ENCODE measurements at regions of chr3 and their contacts with region 1.

Region 1: GRCh38 chr3:40971191-40972168 is 227.8 kb upstream of the CTNNB1 start:
- DNase-seq: peak; percentile 44 to 87
- ATAC-seq: peak; percentile 81 to 97 (median 90)
- H3K4me3 ChIP-seq: peak overlapping the region in 1 of 10 donors; percentile 1
- H3K27ac ChIP-seq: peak overlapping the region; percentile 20 to 85 (median 78)
- H3K4me1 ChIP-seq: peaks cover 19 to 64% (median 58%) of the 10 kb centered on the region in 9 donors
- H3K27me3 ChIP-seq: no peaks in the 10 kb centered on the region
- CTCF ChIP-seq: peak in 1 of 9 donors; percentile 17

Region 2: GRCh38 chr3:40780291-40780924 is 191.1 kb before region 1 on chr3:
- intact Hi-C with region 1: loop called in 3 of 10 experiments (anchors 5 to 10 kb)
- DNase-seq: peak; percentile 78 to 86
- ATAC-seq: peak; percentile 84 to 93 (median 88)
- H3K4me3 ChIP-seq: peak overlapping the region in 7 of 10 donors; percentile 3 to 33 (median 22)
- H3K27ac ChIP-seq: peak overlapping the region; percentile 78 to 88 (median 82)
- H3K4me1 ChIP-seq: peaks cover 15 to 34% (median 23%) of the 10 kb centered on the region in 9 donors
- H3K27me3 ChIP-seq: no peaks in the 10 kb centered on the region
- CTCF ChIP-seq: peak in 2 of 9 donors; percentile 10 to 26

Region 3: DNA sequence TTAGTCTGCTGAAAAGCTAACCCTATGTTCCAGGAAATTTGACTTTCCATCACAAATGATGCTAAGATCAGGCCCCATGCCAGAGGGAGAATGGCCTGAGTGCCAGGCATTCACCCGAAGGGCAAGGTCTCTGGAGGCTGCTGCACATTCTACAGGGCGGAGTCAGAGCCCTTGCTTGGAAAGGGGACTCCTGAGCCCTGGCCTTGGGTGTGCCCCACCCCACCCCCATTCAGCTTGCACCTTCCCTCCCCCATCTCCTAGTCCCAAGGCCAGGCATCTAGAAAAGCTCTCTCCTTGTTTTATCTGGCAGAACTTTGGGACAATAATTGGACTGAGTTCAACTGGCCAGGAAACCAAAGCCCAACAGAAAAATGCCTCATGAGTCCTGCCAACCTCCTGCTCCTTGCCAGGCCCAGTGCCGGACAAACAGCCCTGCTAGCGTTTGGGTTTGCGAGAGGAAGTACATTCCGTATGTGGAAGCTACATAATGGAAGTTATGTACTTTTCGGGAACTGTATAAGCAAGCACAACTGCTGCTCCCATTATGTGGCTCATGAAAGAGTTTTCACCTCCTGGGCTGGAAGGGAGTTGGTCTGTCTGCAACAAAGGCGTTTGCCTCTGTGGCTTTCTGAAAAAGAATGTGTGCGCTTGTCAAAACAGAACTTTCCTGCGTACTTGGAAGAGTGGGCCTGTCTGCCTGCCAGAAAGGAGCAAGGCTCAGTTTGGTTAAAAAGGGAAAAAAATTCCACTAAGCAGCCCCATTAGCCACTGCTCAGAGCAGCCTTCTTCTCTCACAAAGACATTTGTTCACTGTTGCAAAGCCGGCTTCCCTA is 93.6 kb before region 1 on chr3:
- intact Hi-C with region 1: loop called in 4 of 10 experiments (anchors 2 to 5 kb)
- DNase-seq: peak; percentile 69 to 81
- ATAC-seq: peak; percentile 81 to 94 (median 91)
- H3K4me3 ChIP-seq: peak overlapping the region in 1 of 10 donors; percentile 23
- H3K27ac ChIP-seq: peak overlapping the region; percentile 60 to 88 (median 79)
- H3K4me1 ChIP-seq: peaks cover 18 to 51% (median 32%) of the 10 kb centered on the region in 9 donors
- H3K27me3 ChIP-seq: no peaks in the 10 kb centered on the region
- CTCF ChIP-seq: no peak

Region 4: DNA sequence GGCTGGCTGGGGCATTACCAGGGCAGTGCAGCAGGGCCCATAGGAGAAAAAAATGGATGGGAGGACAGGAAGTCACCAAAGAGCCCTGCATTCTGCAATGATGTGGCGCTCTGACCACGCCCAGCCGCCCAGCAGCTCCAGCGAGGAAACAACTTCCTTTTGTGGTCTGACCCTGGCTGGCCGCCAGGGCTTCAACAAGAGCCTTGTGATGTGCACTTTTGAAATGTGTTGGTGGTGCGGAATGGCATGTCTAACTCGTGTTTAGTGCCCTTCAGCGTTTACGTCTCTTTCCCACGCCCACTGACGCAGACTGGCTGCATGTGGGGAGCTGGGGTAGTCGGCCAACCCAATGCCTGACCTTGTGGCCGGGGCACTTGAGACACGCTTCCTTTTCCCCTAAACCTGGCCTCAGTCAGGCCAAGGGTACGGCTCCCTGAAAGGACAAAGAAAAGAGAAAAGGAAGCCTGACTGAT is 146.0 kb after region 1 on chr3:
- intact Hi-C with region 1: loop called in 2 of 10 experiments (anchors 5 to 10 kb)
- DNase-seq: peak; percentile 88 to 90
- ATAC-seq: peak; percentile 89 to 96 (median 94)
- H3K4me3 ChIP-seq: peak overlapping the region in 2 of 10 donors; percentile 4 to 8
- H3K27ac ChIP-seq: peak overlapping the region in 8 of 10 donors; percentile 37 to 81 (median 58)
- H3K4me1 ChIP-seq: peaks cover 3 to 45% (median 28%) of the 10 kb centered on the region in 9 donors
- H3K27me3 ChIP-seq: no peaks in the 10 kb centered on the region
- CTCF ChIP-seq: peak in 1 of 9 donors; percentile 14

Region 5: GRCh38 chr3:41216993-41217392 is 245.5 kb after region 1 on chr3:
- intact Hi-C with region 1: loop called in 1 of 10 experiments (anchors 5 kb)
- DNase-seq: no peak
- ATAC-seq: no peak
- H3K4me3 ChIP-seq: no peak overlapping the region
- H3K27ac ChIP-seq: no peak overlapping the region
- H3K4me1 ChIP-seq: peaks cover 13 to 100% (median 92%) of the 10 kb centered on the region in 9 donors
- H3K27me3 ChIP-seq: no peaks in the 10 kb centered on the region
- CTCF ChIP-seq: no peak

Measured in heart right ventricle (tissue), 16 donors.